WTC11 (cell line): ENCODE measurements at regions of chr1 and their contacts with region 1.

Region 1: DNA sequence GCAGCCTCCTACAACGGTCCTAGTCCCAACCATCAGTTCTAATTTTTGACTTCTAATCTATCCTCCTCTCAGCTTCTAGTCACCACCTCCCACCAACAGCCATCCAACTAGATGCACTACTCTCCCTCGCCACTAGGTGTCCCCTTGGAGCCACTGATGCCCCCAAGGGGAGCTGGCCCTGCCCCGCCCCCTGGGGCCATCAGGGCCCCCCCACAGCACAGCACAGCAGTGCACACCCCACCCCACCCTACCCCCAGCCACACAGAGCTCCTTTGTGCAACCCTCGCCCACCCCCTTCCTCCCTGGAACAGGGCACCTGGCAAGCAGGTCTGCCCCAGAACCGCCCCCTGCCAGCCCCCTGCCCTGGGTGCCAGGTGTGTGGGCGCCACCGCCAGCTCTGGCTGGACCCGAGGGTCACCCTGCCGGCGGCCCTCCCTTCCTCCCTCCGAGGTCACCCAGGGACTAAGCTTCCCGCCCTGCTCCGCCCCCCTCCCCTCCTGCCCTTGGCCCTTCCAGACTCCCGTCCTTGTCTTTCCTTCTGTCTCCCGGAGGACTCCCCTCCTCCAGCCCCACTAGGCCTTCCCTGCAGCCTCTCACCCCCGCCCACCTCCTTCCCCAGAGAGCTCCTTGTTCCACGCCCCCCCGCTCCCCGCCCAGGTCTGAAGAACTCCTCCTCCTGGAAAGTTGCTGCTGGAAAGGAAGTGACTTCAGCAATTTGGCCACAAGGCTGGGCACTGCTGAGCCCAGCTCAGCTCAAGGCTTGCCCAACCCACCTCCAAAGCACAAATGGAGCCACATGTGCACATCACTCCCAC is 47.0 kb downstream of the AHDC1 start:
- DNase-seq: peak; percentile 91
- ATAC-seq: peak; percentile 76
- H3K4me3 Mint-ChIP-seq: peak overlapping the region; percentile 50
- H3K27ac Mint-ChIP-seq: peak overlapping the region; percentile 99
- H3K4me1 Mint-ChIP-seq: peaks cover 54% of the 10 kb centered on the region
- H3K27me3 Mint-ChIP-seq: no peaks in the 10 kb centered on the region
- CTCF ChIP-seq: peak; percentile 97

Region 2: DNA sequence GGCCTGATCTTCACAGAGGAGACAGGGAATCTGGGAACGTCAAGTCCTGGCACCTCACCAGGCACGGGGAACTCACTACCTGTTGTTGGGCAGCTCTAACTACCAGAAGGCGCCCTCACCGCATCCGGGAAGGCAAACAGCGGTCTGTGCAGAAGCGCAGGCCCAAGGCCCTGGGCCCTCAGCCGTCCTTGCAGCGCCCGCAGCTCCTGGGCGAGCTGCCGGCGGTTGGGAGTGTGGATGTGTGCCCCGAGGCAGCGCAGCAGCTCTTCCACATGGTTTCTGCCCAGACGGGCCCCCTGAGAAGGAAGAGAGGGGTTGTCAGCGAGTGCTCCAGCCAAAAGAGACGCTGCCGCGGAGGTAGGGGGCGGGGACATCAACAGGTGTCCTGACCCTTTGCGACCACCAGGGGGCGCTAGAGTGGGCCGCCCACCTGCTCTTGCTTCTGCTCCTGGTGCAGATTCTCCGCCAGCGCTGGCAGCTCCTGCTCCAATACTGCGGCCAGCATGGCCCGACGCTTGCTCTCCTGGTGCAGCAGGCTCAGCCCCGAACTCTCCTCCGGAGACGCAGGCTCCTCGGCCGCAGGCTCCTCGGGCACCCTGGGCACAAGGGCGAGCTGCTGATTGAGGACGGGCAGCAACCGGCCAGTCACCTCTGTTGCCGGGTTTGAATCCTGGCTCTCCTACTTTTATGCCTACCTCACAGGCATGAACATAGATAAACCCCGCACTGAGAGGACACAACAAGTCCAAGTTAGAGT is 199.5 kb before region 1 on chr1:
- CTCF ChIA-PET with region 1: interaction called, 14 read pairs
- POLR2A ChIA-PET with region 1: no interaction called
- DNase-seq: peak; percentile 87
- ATAC-seq: peak; percentile 70
- H3K4me3 Mint-ChIP-seq: peak overlapping the region; percentile 37
- H3K27ac Mint-ChIP-seq: no peak overlapping the region
- H3K4me1 Mint-ChIP-seq: peaks cover 17% of the 10 kb centered on the region
- H3K27me3 Mint-ChIP-seq: peaks cover 49% of the 10 kb centered on the region
- CTCF ChIP-seq: peak; percentile 100

Region 3: GRCh38 chr1:27430903-27431600 is 125.9 kb before region 1 on chr1:
- CTCF ChIA-PET with region 1: interaction called, 11 read pairs
- POLR2A ChIA-PET with region 1: no interaction called
- DNase-seq: no peak
- ATAC-seq: no peak
- H3K4me3 Mint-ChIP-seq: no peak overlapping the region
- H3K27ac Mint-ChIP-seq: peak overlapping the region; percentile 91
- H3K4me1 Mint-ChIP-seq: peaks cover 75% of the 10 kb centered on the region
- H3K27me3 Mint-ChIP-seq: no peaks in the 10 kb centered on the region
- CTCF ChIP-seq: no peak

Region 4: GRCh38 chr1:27536767-27537166 is 20.2 kb before region 1 on chr1:
- CTCF ChIA-PET with region 1: interaction called, 87 read pairs
- POLR2A ChIA-PET with region 1: no interaction called
- DNase-seq: peak; percentile 59
- ATAC-seq: peak; percentile 70
- H3K4me3 Mint-ChIP-seq: no peak overlapping the region
- H3K27ac Mint-ChIP-seq: peak overlapping the region; percentile 49; the same call in 1 of the 2 replicates
- H3K4me1 Mint-ChIP-seq: peaks cover 61% of the 10 kb centered on the region
- H3K27me3 Mint-ChIP-seq: no peaks in the 10 kb centered on the region
- CTCF ChIP-seq: no peak

Region 5: GRCh38 chr1:27581823-27582243 is 24.8 kb after region 1 on chr1:
- CTCF ChIA-PET with region 1: interaction called, 489 read pairs
- POLR2A ChIA-PET with region 1: no interaction called
- DNase-seq: no peak
- ATAC-seq: no peak
- H3K4me3 Mint-ChIP-seq: no peak overlapping the region
- H3K27ac Mint-ChIP-seq: peak overlapping the region; percentile 21
- H3K4me1 Mint-ChIP-seq: peaks cover 10% of the 10 kb centered on the region
- H3K27me3 Mint-ChIP-seq: no peaks in the 10 kb centered on the region
- CTCF ChIP-seq: no peak

Region 6: DNA sequence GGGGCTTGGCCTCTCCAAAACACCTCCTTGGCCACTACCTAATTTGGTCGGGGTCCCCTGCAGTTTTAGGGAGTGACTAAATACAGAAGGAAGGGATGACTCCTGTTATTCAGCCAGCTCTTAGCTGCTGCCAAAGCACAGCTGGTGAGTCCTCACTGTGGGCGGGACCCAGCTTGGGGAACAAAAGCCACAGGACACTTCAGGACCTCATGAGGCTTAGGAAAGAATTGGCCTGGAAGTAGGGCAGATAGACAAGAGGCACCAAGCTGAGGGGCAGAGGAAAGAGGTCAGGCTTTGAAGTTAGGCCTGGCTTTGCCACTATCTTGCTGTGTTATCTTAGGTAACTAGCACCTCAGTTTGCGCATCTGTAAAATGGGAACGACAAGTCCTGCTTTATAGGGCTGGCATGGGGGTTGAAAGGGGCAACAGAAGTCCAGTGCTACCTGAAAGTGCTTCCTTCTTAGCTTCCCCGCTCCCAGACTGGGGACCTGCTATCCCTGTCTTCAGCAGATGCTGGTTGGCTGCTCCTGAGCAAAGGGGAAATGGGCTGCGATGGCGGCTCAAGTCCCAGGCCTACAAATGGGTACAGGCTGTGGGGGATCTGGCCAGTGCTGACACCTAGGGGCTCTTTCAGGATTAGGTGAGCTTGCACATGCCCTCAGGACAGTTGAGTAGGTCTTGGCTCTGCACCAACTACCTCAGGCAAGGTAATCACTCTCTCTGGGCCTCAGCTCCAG is 99.3 kb after region 1 on chr1:
- CTCF ChIA-PET with region 1: interaction called, 51 read pairs
- POLR2A ChIA-PET with region 1: no interaction called
- DNase-seq: peak; percentile 70
- ATAC-seq: peak; percentile 57
- H3K4me3 Mint-ChIP-seq: no peak overlapping the region
- H3K27ac Mint-ChIP-seq: peak overlapping the region; percentile 79
- H3K4me1 Mint-ChIP-seq: peaks cover 37% of the 10 kb centered on the region
- H3K27me3 Mint-ChIP-seq: peaks cover 3% of the 10 kb centered on the region; the same call in 1 of the 2 replicates
- CTCF ChIP-seq: no peak